Activated CD8-positive, alpha-beta T cell treated with anti-CD3 and anti-CD28 coated beads, Interleukin-2, amount 10 ng/mL, durations not matched to agents 7 days and 5 days (primary cell): ENCODE measurements at regions of chr5 and their contacts with region 1.

Region 1: DNA sequence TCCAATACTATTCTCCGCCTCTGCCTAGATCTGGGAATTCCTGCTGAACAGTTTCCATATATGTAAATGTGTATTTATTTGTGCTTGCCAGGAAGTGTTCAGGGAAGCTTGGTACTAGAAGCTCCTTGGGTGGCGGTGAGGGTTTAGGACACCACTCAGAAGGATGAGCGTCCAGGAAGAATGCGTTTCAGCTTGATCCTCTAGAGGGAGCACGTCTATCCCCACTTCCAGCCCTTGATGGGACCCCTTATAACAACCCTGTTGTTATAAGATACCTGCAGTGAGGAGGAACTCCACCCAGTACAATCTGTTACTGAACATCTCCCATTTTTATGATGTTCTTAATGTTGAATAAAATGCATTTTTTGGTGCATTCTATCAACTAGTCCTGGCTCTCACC is 88.9 kb downstream of the CYFIP2 start:
- DNase-seq: no peak
- ATAC-seq: no peak
- H3K4me3 Mint-ChIP-seq: no peak overlapping the region
- H3K27ac Mint-ChIP-seq: peak overlapping the region; percentile 26
- H3K4me1 Mint-ChIP-seq: peaks cover 12% of the 10 kb centered on the region
- H3K27me3 Mint-ChIP-seq: no peaks in the 10 kb centered on the region

Region 2: DNA sequence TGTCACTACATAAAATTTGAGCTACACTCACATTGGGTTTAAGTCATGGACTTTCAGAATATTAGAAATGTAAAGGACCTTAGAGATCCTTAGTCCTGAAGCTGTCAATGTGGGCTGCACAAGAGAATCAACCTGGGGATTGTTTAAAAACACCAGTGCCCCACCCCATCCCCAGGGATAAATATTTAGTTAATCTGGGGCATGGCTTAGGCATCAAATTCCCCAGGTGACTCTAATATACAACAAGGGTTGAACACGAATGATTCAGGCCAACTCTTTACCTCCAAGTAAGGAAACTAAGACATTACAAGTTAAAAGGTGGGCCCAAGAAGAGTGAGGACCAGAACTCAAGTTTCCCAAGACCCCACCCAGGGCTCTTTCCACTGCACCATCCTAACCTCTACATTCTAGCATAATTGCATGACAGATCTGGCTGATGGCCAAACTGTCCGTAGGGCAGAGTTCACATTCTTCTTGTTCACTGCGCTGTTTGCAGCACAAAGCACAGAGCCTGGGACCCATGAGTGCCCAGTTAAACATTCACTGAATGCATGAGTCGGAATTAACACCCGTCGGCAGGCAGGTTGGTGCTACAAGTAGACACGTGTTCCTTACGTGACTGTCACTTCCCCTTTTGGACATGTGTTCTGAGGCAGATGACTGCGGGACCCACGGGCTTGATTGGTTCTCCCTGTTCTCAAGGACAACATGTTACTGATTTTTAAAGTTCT is 63.7 kb before region 1 on chr5:
- CTCF ChIA-PET with region 1: no interaction called
- POLR2A ChIA-PET with region 1: no interaction called
- DNase-seq: no peak
- ATAC-seq: no peak
- H3K4me3 Mint-ChIP-seq: no peak overlapping the region
- H3K27ac Mint-ChIP-seq: peak overlapping the region; percentile 60
- H3K4me1 Mint-ChIP-seq: peaks cover 70% of the 10 kb centered on the region
- H3K27me3 Mint-ChIP-seq: no peaks in the 10 kb centered on the region

Region 3: DNA sequence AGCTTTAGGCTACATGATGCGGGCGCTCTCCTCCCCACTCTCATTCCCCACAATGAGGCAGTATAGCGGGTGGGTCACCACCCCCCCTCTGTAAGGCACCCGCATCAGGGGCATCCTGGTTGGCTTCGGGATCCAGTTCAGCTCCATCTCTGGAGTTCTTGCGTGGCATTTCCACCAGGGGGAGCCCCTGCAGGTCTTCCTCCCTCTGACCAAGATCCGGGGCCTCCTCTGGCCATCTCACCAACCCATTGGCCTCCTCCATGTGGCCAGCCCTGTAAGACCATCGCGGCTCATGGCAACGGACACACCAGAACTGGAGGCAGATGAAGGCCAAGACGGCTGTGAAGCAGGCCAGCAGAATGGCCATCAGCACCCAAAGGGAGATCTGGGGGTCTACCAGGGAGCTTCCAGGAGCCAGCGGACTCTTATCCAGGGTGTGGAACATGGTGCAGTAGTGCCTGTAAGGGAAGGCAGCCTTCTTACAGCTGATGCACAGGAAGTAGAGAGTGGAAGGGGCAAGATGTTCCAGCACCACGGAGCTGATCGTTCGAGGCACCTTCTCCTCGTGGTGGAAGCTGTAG is 11.9 kb before region 1 on chr5:
- CTCF ChIA-PET with region 1: interaction called, 42 read pairs
- POLR2A ChIA-PET with region 1: no interaction called
- DNase-seq: peak; percentile 48
- ATAC-seq: peak; percentile 60
- H3K4me3 Mint-ChIP-seq: no peak overlapping the region
- H3K27ac Mint-ChIP-seq: no peak overlapping the region
- H3K4me1 Mint-ChIP-seq: peaks cover 5% of the 10 kb centered on the region
- H3K27me3 Mint-ChIP-seq: no peaks in the 10 kb centered on the region

Region 4: GRCh38 chr5:157502143-157502647 is 147.4 kb after region 1 on chr5:
- CTCF ChIA-PET with region 1: no interaction called
- POLR2A ChIA-PET with region 1: no interaction called
- DNase-seq: no peak
- ATAC-seq: peak; percentile 39
- H3K4me3 Mint-ChIP-seq: no peak overlapping the region
- H3K27ac Mint-ChIP-seq: no peak overlapping the region
- H3K4me1 Mint-ChIP-seq: peaks cover 30% of the 10 kb centered on the region
- H3K27me3 Mint-ChIP-seq: no peaks in the 10 kb centered on the region

Region 5: GRCh38 chr5:157677931-157678330 is 323.1 kb after region 1 on chr5:
- CTCF ChIA-PET with region 1: no interaction called
- POLR2A ChIA-PET with region 1: no interaction called
- DNase-seq: no peak
- ATAC-seq: no peak
- H3K4me3 Mint-ChIP-seq: no peak overlapping the region
- H3K27ac Mint-ChIP-seq: no peak overlapping the region
- H3K4me1 Mint-ChIP-seq: no peaks in the 10 kb centered on the region
- H3K27me3 Mint-ChIP-seq: peaks cover 5% of the 10 kb centered on the region